SK-N-SH (cell line): ENCODE measurements at regions of chr12 and their contacts with region 1.

Region 1: GRCh38 chr12:26845057-26845666 is 12.2 kb upstream of the ITPR2 start:
- DNase-seq: peak; percentile 50
- H3K4me3 ChIP-seq: no peak overlapping the region; a peak in 1 of 4 replicates
- H3K27ac ChIP-seq: peak overlapping the region in 1 of 2 experiments; percentile 91; a peak in 1 of 4 replicates
- H3K4me1 ChIP-seq: peaks cover 0 to 7% of the 10 kb centered on the region in 2 experiments; a peak in 2 of 4 replicates
- H3K27me3 ChIP-seq: no peaks in the 10 kb centered on the region
- CTCF ChIP-seq: peak; percentile 58
- EP300 ChIP-seq: no peak
- RAD21 ChIP-seq: peak; percentile 55

Region 2: GRCh38 chr12:26810330-26810729 is 34.8 kb before region 1 on chr12:
- CTCF ChIA-PET with region 1: no interaction called
- POLR2A ChIA-PET with region 1: no interaction called
- DNase-seq: no peak
- H3K4me3 ChIP-seq: peak overlapping the region in 1 of 2 experiments; percentile 49; a peak in 3 of 4 replicates
- H3K27ac ChIP-seq: peak overlapping the region in 1 of 2 experiments; percentile 83; a peak in 2 of 4 replicates
- H3K4me1 ChIP-seq: peaks cover 2 to 15% of the 10 kb centered on the region in 2 experiments; a peak in 3 of 4 replicates
- H3K27me3 ChIP-seq: no peaks in the 10 kb centered on the region
- CTCF ChIP-seq: no peak
- EP300 ChIP-seq: no peak
- RAD21 ChIP-seq: no peak

Region 3: GRCh38 chr12:26863502-26863901 is 18.3 kb after region 1 on chr12:
- CTCF ChIA-PET with region 1: interaction called, 10 read pairs
- POLR2A ChIA-PET with region 1: no interaction called
- DNase-seq: no peak
- H3K4me3 ChIP-seq: no peak overlapping the region; a peak in 1 of 4 replicates
- H3K27ac ChIP-seq: no peak overlapping the region
- H3K4me1 ChIP-seq: peaks cover 0 to 2% of the 10 kb centered on the region in 2 experiments; a peak in 1 of 4 replicates
- H3K27me3 ChIP-seq: no peaks in the 10 kb centered on the region
- CTCF ChIP-seq: peak; percentile 38
- EP300 ChIP-seq: no peak
- RAD21 ChIP-seq: no peak

Region 4: DNA sequence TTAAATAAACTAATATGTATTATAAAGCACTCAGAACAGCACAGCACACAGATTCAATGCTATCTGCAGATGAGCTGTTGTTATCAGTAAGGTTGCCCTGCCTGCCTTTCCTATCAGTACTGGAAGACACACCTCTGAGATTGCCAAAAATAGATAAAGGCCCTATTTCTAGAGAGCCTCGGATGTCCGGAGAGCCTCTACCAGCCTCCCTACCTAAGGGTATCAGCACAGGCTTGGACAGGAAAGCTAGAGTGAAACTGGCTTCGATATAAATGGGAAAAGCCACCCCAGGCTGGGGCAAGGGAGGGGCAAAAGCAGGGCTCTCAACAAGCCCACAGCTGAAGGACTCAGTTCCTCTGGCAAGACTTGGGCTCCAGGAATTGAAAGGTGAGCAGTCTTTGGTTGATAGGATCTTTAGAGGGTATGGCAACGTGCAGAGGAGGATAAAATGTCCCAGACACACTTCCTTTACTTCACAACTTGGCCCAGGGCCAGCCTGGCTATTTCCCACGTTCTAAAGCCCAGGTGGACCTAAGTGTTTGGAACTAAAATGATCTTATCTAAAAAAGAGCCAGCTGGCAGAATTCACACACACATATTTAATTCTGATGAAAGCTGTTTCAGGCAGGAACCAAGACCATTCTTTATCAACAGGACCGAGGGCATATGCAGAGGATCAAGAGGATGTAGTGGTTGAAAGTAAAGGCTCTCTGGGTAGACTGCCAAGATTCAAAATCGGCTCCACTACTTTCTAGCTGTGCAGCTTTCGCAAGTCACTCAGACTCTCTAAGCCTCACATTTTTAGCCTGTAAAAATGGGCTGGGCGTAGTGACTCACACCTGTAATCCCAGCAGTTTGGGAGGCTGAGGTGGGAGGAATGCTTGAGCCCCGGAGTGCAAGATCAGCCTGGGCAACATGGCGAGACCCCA is 25.6 kb after region 1 on chr12:
- CTCF ChIA-PET with region 1: interaction called, 23 read pairs
- POLR2A ChIA-PET with region 1: no interaction called
- DNase-seq: peak; percentile 53
- H3K4me3 ChIP-seq: no peak overlapping the region
- H3K27ac ChIP-seq: peak overlapping the region in 1 of 2 experiments; percentile 84; a peak in 2 of 4 replicates
- H3K4me1 ChIP-seq: peaks cover 0 to 23% of the 10 kb centered on the region in 2 experiments; a peak in 2 of 4 replicates
- H3K27me3 ChIP-seq: no peaks in the 10 kb centered on the region
- CTCF ChIP-seq: no peak
- EP300 ChIP-seq: peak in 1 of 2 experiments; percentile 79; a peak in 2 of 4 replicates
- RAD21 ChIP-seq: peak; percentile 9; the same call in 1 of the 2 replicates